ENCODE measurements at regions of chr7 and their contacts with region 1.

Region 1: DNA sequence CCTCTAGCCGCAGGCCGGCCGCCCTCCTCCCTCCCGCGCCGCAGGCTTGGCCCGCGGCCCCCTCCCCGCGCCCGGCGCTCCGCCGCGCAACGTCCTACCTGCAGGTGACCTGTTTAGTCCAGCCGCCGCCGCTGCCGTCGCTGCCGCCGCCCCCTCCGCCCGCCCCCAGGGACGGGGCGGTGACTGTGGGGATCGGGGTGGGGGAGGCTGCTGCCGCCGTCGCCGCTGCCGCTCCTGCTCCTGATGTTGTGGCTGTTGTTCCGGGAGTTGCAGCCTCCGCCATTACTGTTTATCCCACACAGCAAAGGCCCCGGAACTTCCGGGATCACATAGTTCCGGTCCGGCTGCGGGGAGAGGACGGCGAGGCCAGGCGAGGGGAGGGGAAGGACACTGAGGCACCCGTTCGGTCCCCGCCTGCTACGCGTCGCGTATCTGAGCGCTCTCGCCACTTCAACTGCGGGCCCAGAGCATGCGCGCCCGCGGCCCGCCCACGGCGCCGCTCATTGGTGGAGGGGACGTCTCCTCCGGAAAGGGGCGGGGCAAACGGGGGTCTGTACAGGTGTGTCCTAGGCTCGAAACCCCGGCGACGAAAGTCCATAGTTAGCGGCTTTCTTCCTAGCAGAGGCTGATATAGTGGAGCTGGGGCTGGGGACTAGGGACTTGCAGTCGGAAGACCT is at the start of gene MKRN1:
- DNase-seq: peak; percentile 90
- H3K4me3 Mint-ChIP-seq: peak within 1 kb of the TSS; percentile 99
- H3K27ac Mint-ChIP-seq: peak within 1 kb of the TSS; percentile 99
- H3K4me1 Mint-ChIP-seq: peaks cover 29% of the 10 kb centered on the region
- H3K27me3 Mint-ChIP-seq: peaks cover 8% of the 10 kb centered on the region
- total RNA-seq, gene MKRN1: 61.7 and 72.2 TPM in 2 replicates

Region 2: GRCh38 chr7:139359366-139360209 is 1119.6 kb before region 1 on chr7 and contains the start of gene LUC7L2:
- intact Hi-C with region 1: loop called (anchors 5 kb)
- DNase-seq: peak; percentile 99
- H3K4me3 Mint-ChIP-seq: peak within 1 kb of the TSS; percentile 88
- H3K27ac Mint-ChIP-seq: peak within 1 kb of the TSS; percentile 97
- H3K4me1 Mint-ChIP-seq: peaks cover 29% of the 10 kb centered on the region
- H3K27me3 Mint-ChIP-seq: no peaks in the 10 kb centered on the region
- total RNA-seq, gene LUC7L2: 179 and 194 TPM in 2 replicates

Region 3: DNA sequence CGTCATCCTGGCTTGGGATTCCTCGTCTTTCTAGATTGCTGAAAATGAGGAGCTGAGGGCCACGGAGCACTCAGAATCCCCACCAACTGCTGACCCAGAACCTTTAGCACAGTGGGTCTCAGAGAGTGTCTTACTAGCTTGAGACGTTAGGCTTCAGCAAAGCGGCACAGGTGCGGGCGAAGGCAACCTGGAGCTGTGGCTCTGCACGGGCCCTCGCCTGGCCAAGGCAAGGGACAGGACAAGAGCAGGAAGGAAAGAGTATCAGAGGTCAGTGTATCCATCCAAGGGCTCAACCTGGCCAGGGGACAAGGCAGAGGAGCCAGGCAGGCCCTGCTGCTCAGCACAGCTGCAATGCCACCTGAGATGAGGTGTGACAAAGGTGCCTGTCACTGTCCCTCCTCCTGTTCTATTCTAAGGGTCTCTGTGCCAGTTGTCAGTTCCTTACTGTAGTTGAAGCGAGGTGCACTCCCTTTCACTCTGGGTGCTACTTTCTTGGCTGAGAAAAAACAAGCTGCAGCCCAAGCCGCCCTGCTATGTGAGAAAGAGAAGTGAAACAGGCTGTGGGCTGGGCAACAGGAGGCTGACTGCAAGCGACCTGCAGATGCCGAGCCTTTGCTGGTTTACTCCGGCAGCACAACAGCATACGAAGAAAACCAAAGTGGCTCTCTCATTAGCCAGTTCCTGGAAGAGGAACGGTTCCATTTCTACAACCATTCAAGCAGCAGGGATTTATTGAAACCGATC is 269.2 kb before region 1 on chr7:
- intact Hi-C with region 1: loop called (anchors 5 kb)
- DNase-seq: peak; percentile 64
- H3K4me3 Mint-ChIP-seq: peak overlapping the region; percentile 71
- H3K27ac Mint-ChIP-seq: peak overlapping the region; percentile 86
- H3K4me1 Mint-ChIP-seq: peaks cover 79% of the 10 kb centered on the region
- H3K27me3 Mint-ChIP-seq: no peaks in the 10 kb centered on the region

Region 4: DNA sequence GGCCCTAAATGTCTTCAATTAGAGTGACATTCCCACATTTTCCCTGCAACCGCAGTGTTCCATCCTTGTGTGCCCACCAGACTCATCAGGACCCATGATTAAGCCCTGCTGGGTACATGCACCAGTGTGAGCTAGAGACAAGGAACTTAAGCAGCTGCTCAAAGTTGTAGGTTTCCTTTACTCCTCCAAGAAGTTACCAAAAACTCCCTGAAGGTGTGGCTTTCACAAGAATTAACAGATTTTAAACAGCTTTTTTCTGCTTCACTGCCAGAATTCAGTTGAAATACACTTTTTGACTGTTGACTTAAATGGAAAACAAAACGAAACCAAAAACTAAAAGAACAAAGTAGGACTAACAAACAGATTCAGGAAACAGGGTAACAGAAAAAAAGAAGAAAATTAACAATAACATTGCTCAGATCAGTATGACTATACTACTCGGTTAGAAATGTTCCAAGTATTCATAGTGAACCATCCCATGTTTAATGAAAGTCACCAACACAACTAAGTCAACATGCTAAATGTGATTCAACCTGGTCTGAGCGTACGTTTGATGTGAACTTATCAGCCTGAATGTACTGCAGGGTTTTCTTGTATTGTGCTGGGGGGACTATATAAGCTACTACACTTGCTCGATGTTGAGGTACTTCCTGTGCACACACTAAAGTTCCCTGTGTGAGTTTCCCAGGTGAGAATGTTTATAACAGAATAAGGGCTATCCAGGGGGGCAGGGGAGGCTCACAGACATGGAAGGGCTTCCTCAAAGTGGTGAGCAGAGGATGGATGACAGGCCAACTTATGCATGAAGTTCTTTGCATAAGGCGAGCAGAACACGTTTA is 103.1 kb before region 1 on chr7:
- intact Hi-C with region 1: loop called (anchors 1 kb)
- DNase-seq: peak; percentile 47
- H3K4me3 Mint-ChIP-seq: peak overlapping the region; percentile 61
- H3K27ac Mint-ChIP-seq: peak overlapping the region; percentile 98
- H3K4me1 Mint-ChIP-seq: peaks cover 48% of the 10 kb centered on the region
- H3K27me3 Mint-ChIP-seq: no peaks in the 10 kb centered on the region

Region 5: DNA sequence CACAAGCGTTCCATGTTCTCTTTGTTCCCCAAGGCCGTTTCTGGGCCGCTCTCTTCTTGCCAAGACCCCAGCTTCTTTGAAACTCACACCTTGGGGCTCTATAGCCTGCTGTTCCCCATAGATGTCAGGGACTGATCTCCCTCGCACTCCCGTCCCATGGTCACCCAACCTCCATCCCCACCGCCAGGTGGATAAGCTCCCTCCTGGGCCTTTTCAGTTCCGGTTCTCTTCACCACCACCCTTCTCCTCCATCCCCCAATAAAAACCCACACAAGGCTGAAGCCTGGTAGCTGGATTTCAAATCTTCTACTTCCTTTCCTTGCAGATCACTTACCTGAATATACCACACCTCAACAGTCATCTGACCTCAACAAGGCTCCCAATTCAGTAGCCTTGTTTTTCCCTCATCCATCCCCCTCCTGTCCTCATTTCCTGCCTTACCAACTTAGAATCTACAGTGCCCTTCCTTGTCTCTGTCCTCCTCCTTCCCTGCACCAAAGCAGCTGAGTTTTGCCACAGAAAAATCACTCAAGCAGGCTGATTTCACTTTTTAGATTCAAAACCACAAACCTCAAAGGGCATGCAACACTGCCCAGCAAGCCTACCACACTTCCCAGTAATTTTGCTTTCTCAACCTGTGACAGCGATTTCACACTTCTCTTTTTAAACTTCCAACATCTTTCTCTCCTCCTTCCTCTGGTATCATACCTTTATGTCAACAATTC is 88.6 kb before region 1 on chr7:
- intact Hi-C with region 1: no loop called
- DNase-seq: no peak
- H3K4me3 Mint-ChIP-seq: no peak overlapping the region
- H3K27ac Mint-ChIP-seq: no peak overlapping the region
- H3K4me1 Mint-ChIP-seq: peaks cover 2% of the 10 kb centered on the region
- H3K27me3 Mint-ChIP-seq: no peaks in the 10 kb centered on the region

Region 6: GRCh38 chr7:140447841-140448240 is 31.4 kb before region 1 on chr7:
- intact Hi-C with region 1: no loop called
- DNase-seq: no peak
- H3K4me3 Mint-ChIP-seq: no peak overlapping the region
- H3K27ac Mint-ChIP-seq: no peak overlapping the region
- H3K4me1 Mint-ChIP-seq: peaks cover 21% of the 10 kb centered on the region
- H3K27me3 Mint-ChIP-seq: no peaks in the 10 kb centered on the region

Region 7: GRCh38 chr7:140653319-140654108 is 174.3 kb after region 1 on chr7:
- intact Hi-C with region 1: loop called (anchors 1 kb)
- DNase-seq: no peak
- H3K4me3 Mint-ChIP-seq: no peak overlapping the region
- H3K27ac Mint-ChIP-seq: no peak overlapping the region
- H3K4me1 Mint-ChIP-seq: peaks cover 21% of the 10 kb centered on the region
- H3K27me3 Mint-ChIP-seq: peaks cover 49% of the 10 kb centered on the region

Region 8: DNA sequence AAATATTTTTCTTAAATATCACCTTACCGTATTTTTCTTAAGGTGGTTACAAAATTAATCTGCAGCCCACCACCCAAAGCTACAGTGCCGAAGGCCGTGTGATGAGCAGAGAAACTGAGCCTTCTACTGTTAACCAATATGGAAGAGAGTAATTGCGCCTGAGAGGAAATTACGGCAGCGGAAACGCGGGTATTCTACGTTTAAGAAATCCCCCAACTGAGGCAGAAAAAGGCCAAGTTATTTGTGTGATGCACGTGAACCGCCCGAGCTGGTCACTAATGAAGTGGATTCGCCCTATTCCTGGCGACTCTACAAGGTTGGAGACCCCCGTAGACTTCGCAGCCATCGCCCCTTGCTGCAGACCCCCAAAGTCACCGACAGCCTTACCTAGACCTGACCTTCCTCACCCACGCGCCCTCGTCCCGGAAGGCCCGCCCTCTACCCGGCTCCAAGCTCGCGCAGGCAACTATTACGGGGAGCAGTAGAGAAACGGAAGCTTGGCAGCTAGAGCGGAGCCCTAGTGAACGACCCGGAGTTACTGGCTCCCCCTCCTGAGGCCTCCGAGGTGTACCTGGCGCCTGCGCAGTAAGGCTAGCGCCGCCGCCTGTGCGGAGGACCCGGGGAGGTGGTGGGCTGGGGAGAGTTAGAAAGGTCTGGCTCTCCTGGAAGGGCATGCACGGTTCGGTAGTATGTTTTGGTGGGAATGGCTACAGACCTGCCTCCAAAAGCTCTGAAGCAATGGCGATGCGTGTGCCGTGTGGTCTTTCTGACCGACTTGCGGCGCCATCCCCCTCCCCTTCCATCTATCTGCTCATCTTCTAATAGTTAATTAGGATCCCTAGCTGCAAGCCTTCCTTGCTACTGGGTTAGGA is 535.6 kb after region 1 on chr7 and contains the start of gene MRPS33:
- intact Hi-C with region 1: loop called (anchors 1 kb)
- DNase-seq: peak; percentile 94
- H3K4me3 Mint-ChIP-seq: peak within 1 kb of the TSS; percentile 92
- H3K27ac Mint-ChIP-seq: peak within 1 kb of the TSS; percentile 98
- H3K4me1 Mint-ChIP-seq: peaks cover 40% of the 10 kb centered on the region
- H3K27me3 Mint-ChIP-seq: peaks cover 14% of the 10 kb centered on the region
- total RNA-seq, gene MRPS33: 63.0 and 73.9 TPM in 2 replicates